ENCODE measurements at regions of chr16 and their contacts with region 1.

Region 1: GRCh38 chr16:30445408-30446202 is at the start of gene SEPHS2:
- DNase-seq: peak; percentile 93 to 98 (median 96)
- ATAC-seq: peak; percentile 97
- H3K4me3 ChIP-seq: peak within 1 kb of the TSS; percentile 83
- H3K4me3 Mint-ChIP-seq: peak within 1 kb of the TSS; percentile 96
- H3K27ac ChIP-seq: peak within 1 kb of the TSS; percentile 76 to 88
- H3K27ac Mint-ChIP-seq: peak within 1 kb of the TSS; percentile 89
- H3K4me1 ChIP-seq: peaks cover 37% of the 10 kb centered on the region
- H3K4me1 Mint-ChIP-seq: peaks cover 44% of the 10 kb centered on the region
- H3K27me3 ChIP-seq: no peaks in the 10 kb centered on the region
- H3K27me3 Mint-ChIP-seq: no peaks in the 10 kb centered on the region
- CTCF ChIP-seq: peak; percentile 16
- total RNA-seq, gene SEPHS2: 25.4 to 25.9 TPM

Region 2: GRCh38 chr16:30399435-30400186 is 46.0 kb before region 1 on chr16:
- CTCF ChIA-PET with region 1: no interaction called
- POLR2A ChIA-PET with region 1: no interaction called
- intact Hi-C with region 1: no loop called
- DNase-seq: no peak
- ATAC-seq: no peak
- H3K4me3 ChIP-seq: peak overlapping the region; percentile 81
- H3K4me3 Mint-ChIP-seq: peak overlapping the region; percentile 91
- H3K27ac ChIP-seq: no peak overlapping the region
- H3K27ac Mint-ChIP-seq: peak overlapping the region; percentile 76
- H3K4me1 ChIP-seq: peaks cover 49% of the 10 kb centered on the region
- H3K4me1 Mint-ChIP-seq: peaks cover 48% of the 10 kb centered on the region
- H3K27me3 ChIP-seq: no peaks in the 10 kb centered on the region
- H3K27me3 Mint-ChIP-seq: no peaks in the 10 kb centered on the region
- CTCF ChIP-seq: no peak

Region 3: GRCh38 chr16:30472328-30472942 is 26.8 kb after region 1 on chr16 and contains the start of gene ITGAL:
- CTCF ChIA-PET with region 1: interaction called, 22 read pairs
- POLR2A ChIA-PET with region 1: interaction called, 25 read pairs
- intact Hi-C with region 1: loop called (anchors 1 to 2 kb)
- DNase-seq: peak; percentile 63 to 96 (median 80)
- ATAC-seq: peak; percentile 83
- H3K4me3 ChIP-seq: peak within 1 kb of the TSS; percentile 83
- H3K4me3 Mint-ChIP-seq: peak within 1 kb of the TSS; percentile 96
- H3K27ac ChIP-seq: peak within 1 kb of the TSS; percentile 75 to 94
- H3K27ac Mint-ChIP-seq: peak within 1 kb of the TSS; percentile 90
- H3K4me1 ChIP-seq: peaks cover 81% of the 10 kb centered on the region
- H3K4me1 Mint-ChIP-seq: peaks cover 70% of the 10 kb centered on the region
- H3K27me3 ChIP-seq: no peaks in the 10 kb centered on the region
- H3K27me3 Mint-ChIP-seq: no peaks in the 10 kb centered on the region
- CTCF ChIP-seq: no peak
- total RNA-seq, gene ITGAL: 186 to 187 TPM

Region 4: GRCh38 chr16:30526823-30527635 is 81.4 kb after region 1 on chr16:
- CTCF ChIA-PET with region 1: interaction called, 5 read pairs
- POLR2A ChIA-PET with region 1: no interaction called
- intact Hi-C with region 1: loop called in 1 of 2 experiments (anchors 2 kb)
- DNase-seq: peak; percentile 57 to 95 (median 86)
- ATAC-seq: peak; percentile 71
- H3K4me3 ChIP-seq: peak overlapping the region; percentile 83
- H3K4me3 Mint-ChIP-seq: peak overlapping the region; percentile 88
- H3K27ac ChIP-seq: peak overlapping the region; percentile 76 to 81
- H3K27ac Mint-ChIP-seq: peak overlapping the region; percentile 81
- H3K4me1 ChIP-seq: peaks cover 49% of the 10 kb centered on the region
- H3K4me1 Mint-ChIP-seq: peaks cover 26% of the 10 kb centered on the region
- H3K27me3 ChIP-seq: no peaks in the 10 kb centered on the region
- H3K27me3 Mint-ChIP-seq: no peaks in the 10 kb centered on the region
- CTCF ChIP-seq: peak; percentile 18

Region 5: DNA sequence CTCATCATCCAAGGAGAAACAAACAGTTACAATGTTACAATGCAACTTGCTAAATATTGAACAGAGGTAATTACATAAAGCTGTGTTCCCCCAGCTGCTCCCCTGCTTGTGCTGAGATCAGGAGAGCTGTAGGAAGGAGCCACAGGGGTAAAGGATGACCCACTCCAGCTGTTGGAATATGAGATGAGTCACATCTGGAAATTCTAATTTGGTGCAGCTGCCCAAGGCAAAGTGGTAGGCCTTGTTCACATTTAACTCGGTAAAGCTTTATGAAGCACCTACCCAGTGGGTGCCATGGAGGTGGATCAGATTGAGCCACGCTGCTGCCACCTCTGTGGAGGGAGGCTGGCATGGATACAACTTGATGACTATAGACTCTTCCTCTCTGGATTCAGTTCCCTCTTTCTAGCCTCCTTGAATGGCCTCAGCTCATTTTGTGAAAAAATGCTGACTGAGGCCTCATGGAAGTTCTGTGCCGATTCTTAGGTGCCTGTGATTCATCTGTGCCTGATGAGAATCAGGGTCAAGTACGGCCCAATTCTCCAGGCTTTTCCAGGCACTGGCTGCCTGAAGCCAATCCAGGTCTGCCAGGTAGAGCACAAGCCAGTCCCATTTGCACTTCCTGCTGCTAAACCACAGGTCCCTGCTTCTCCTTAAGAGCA is 157.1 kb after region 1 on chr16:
- CTCF ChIA-PET with region 1: interaction called, 5 read pairs
- POLR2A ChIA-PET with region 1: interaction called, 3 read pairs
- intact Hi-C with region 1: loop called (anchors 1 to 5 kb)
- DNase-seq: peak in 2 of 14 experiments; percentile 20 to 26
- ATAC-seq: no peak
- H3K4me3 ChIP-seq: no peak overlapping the region
- H3K4me3 Mint-ChIP-seq: no peak overlapping the region
- H3K27ac ChIP-seq: no peak overlapping the region
- H3K27ac Mint-ChIP-seq: no peak overlapping the region
- H3K4me1 ChIP-seq: peaks cover 7% of the 10 kb centered on the region
- H3K4me1 Mint-ChIP-seq: peaks cover 9% of the 10 kb centered on the region
- H3K27me3 ChIP-seq: no peaks in the 10 kb centered on the region
- H3K27me3 Mint-ChIP-seq: no peaks in the 10 kb centered on the region
- CTCF ChIP-seq: no peak

Measured in CD4-positive, alpha-beta T cell (primary cell).